ENCODE measurements at regions of chr5 and their contacts with region 1.

Region 1: GRCh38 chr5:57137401-57137800 is 36.5 kb upstream of the GPBP1 start:
- DNase-seq: no peak
- H3K4me3 Mint-ChIP-seq: no peak overlapping the region
- H3K27ac Mint-ChIP-seq: no peak overlapping the region
- H3K4me1 Mint-ChIP-seq: no peaks in the 10 kb centered on the region
- H3K27me3 Mint-ChIP-seq: no peaks in the 10 kb centered on the region

Region 2: GRCh38 chr5:56900858-56901578 is 236.4 kb before region 1 on chr5:
- CTCF ChIA-PET with region 1: interaction called, 49 read pairs
- intact Hi-C with region 1: loop called (anchors 1 kb)
- DNase-seq: peak; percentile 46
- H3K4me3 Mint-ChIP-seq: no peak overlapping the region
- H3K27ac Mint-ChIP-seq: no peak overlapping the region
- H3K4me1 Mint-ChIP-seq: peaks cover 2% of the 10 kb centered on the region
- H3K27me3 Mint-ChIP-seq: no peaks in the 10 kb centered on the region

Region 3: DNA sequence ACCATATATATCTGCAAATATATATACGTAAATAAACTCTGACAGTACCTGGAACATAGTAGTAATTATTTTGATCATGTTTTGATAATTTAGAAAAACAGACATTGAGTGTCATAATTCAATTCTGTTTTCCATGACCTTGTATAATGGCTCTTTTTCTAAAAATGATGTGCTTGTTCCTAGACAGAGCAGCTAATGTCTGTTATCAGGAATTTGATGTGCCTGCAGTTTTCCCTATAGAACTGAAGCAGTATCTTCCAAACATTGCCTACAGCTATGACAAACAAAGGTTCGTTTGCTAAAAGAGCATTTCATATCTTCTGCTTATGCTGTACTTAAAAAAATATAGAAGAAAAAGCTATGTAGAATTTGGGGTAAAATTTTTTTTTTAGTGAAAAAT is 222.7 kb before region 1 on chr5:
- CTCF ChIA-PET with region 1: interaction called, 10 read pairs
- intact Hi-C with region 1: no loop called
- DNase-seq: no peak
- H3K4me3 Mint-ChIP-seq: no peak overlapping the region
- H3K27ac Mint-ChIP-seq: no peak overlapping the region
- H3K4me1 Mint-ChIP-seq: peaks cover 12% of the 10 kb centered on the region
- H3K27me3 Mint-ChIP-seq: no peaks in the 10 kb centered on the region

Region 4: GRCh38 chr5:57012511-57012910 is 124.9 kb before region 1 on chr5:
- CTCF ChIA-PET with region 1: no interaction called
- intact Hi-C with region 1: no loop called
- DNase-seq: no peak
- H3K4me3 Mint-ChIP-seq: no peak overlapping the region
- H3K27ac Mint-ChIP-seq: no peak overlapping the region
- H3K4me1 Mint-ChIP-seq: no peaks in the 10 kb centered on the region
- H3K27me3 Mint-ChIP-seq: no peaks in the 10 kb centered on the region

Measured in activated naive CD4-positive, alpha-beta T cell treated with anti-CD3 and anti-CD28 coated beads for 36 hours (primary cell).